ENCODE measurements at regions of chr1 and their contacts with region 1.

Region 1: DNA sequence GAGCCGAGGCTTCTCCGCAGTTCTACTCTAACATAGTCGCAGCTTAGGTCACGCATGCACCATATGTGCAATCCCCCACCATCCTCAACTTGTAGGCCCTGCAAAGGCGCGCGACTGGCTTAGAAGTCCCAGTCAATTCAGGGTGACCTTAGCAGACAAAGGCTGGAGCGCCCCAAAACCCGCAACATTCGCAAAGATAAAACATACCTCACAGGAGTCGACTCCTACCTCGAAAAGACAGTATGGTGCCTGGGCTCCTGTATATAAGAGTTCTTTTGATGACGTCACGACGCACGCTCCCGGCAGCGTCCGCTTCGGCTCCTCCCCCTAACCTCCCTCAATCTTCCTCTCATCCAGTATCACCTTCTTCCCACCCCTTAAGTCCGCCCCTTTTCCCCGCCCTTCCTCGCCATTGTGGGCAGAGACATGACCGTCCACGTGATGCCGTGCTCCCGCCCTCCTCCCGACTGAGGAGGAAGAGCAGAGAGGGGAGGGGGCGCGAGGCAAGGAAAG is at the start of gene GAS5:
- DNase-seq: peak; percentile 100
- ATAC-seq: peak; percentile 80
- H3K4me3 Mint-ChIP-seq: peak within 1 kb of the TSS; percentile 89
- H3K27ac Mint-ChIP-seq: peak within 1 kb of the TSS; percentile 94
- H3K4me1 Mint-ChIP-seq: peaks cover 66% of the 10 kb centered on the region
- H3K27me3 Mint-ChIP-seq: no peaks in the 10 kb centered on the region
- total RNA-seq, gene GAS5: 356 to 367 TPM

Region 2: GRCh38 chr1:173714759-173715537 is 152.9 kb before region 1 on chr1 and contains the start of gene KLHL20:
- CTCF ChIA-PET with region 1: interaction called, 3 read pairs
- POLR2A ChIA-PET with region 1: interaction called, 12 read pairs
- DNase-seq: peak; percentile 92
- ATAC-seq: peak; percentile 99
- H3K4me3 Mint-ChIP-seq: peak within 1 kb of the TSS; percentile 90
- H3K27ac Mint-ChIP-seq: peak within 1 kb of the TSS; percentile 96
- H3K4me1 Mint-ChIP-seq: peaks cover 24% of the 10 kb centered on the region
- H3K27me3 Mint-ChIP-seq: peaks cover 15% of the 10 kb centered on the region
- total RNA-seq, gene KLHL20: 18.3 to 22.3 TPM

Region 3: GRCh38 chr1:173824331-173825081 is 43.3 kb before region 1 on chr1 and contains the starts of genes CENPL and DARS2:
- CTCF ChIA-PET with region 1: interaction called, 4 read pairs
- POLR2A ChIA-PET with region 1: interaction called, 36 read pairs
- DNase-seq: peak; percentile 95
- ATAC-seq: peak; percentile 89
- H3K4me3 Mint-ChIP-seq: peak within 1 kb of the TSS; percentile 86
- H3K27ac Mint-ChIP-seq: peak within 1 kb of the TSS; percentile 98
- H3K4me1 Mint-ChIP-seq: peaks cover 56% of the 10 kb centered on the region
- H3K27me3 Mint-ChIP-seq: no peaks in the 10 kb centered on the region
- total RNA-seq, gene CENPL: 35.5 to 39.2 TPM
- total RNA-seq, gene DARS2: 32.7 to 35.7 TPM

Region 4: DNA sequence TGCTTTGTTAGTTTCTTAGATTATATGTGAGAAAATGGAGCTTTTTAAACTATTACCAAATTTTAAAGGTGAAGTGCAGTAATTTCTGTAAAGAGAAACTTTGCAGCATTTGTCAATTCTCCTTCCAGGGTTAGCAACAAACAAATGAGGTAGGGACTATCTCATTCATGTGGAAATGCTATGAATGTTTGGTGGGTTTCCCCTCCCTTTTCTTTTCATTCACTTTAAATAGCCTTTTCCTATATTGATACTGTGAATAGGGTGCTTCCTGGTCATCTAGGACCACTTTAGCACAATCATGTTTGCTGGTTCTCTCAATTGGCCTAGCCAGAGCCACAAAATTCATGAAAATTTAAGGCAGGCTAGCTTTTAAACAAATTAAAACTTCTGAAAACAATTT is 20.9 kb after region 1 on chr1:
- CTCF ChIA-PET with region 1: interaction called, 4 read pairs
- POLR2A ChIA-PET with region 1: interaction called, 10 read pairs
- DNase-seq: no peak
- ATAC-seq: no peak
- H3K4me3 Mint-ChIP-seq: no peak overlapping the region
- H3K27ac Mint-ChIP-seq: no peak overlapping the region
- H3K4me1 Mint-ChIP-seq: peaks cover 17% of the 10 kb centered on the region
- H3K27me3 Mint-ChIP-seq: no peaks in the 10 kb centered on the region

Region 5: DNA sequence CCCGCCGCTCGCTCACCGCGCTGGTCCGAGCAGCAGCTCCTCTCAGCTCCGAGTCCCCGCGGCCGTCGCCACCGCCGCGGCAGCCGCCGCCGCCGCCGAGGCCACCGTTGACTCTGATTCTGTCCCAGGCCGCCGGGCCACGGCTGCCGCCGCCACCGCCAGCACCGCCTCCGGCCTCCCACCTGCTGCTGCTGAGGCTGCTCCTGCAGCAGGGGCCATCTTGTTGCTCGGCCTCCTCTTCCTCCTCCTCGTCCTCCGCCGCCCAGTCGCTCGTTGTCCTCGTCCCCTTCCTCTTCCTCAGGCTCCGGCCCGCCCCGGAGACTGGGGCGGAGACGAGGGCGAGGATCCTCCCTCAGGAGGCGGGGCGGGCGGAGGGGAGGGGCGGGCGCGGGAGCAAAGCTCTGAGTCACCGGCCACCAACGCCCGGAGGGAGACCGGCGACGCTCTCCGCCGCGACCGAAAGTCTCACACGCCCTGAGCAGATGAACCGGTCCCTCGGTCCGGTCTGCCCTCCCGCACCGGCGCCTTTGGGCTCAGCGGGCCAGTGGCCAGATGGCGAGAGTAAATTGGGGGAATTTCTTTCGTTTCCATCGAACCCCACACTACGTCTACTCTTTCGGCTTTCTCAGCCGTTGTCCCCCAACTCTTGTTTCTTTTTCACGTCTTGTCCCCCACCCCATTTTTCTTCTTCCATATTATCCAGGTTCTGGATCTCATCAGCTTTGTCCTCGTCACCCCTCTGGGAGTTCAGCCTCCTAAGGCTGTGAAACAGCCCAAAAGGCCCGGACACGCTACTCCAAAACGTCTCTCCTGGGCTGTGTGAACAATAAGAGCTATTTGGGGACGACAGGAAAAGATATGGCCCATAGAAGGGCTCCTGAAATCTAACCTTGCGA is 154.5 kb after region 1 on chr1 and contains the start of gene RC3H1:
- CTCF ChIA-PET with region 1: interaction called, 3 read pairs
- POLR2A ChIA-PET with region 1: interaction called, 21 read pairs
- DNase-seq: peak; percentile 91
- ATAC-seq: peak; percentile 94
- H3K4me3 Mint-ChIP-seq: peak within 1 kb of the TSS; percentile 98
- H3K27ac Mint-ChIP-seq: peak within 1 kb of the TSS; percentile 99
- H3K4me1 Mint-ChIP-seq: peaks cover 30% of the 10 kb centered on the region
- H3K27me3 Mint-ChIP-seq: no peaks in the 10 kb centered on the region
- total RNA-seq, gene RC3H1: 28.1 to 32.9 TPM

Measured in activated CD8-positive, alpha-beta T cell treated with anti-CD3 and anti-CD28 coated beads, Interleukin-2, amount 10 ng/mL, durations not matched to agents 7 days and 5 days (primary cell).